Activated CD4-positive, alpha-beta memory T cell treated with anti-CD3 and anti-CD28 coated beads for 36 hours (primary cell): ENCODE measurements at regions of chr1 and their contacts with region 1.

Region 1: GRCh38 chr1:232127190-232127589 is 500.6 kb downstream of the DISC1 start:
- DNase-seq: peak; percentile 13
- H3K4me3 Mint-ChIP-seq: no peak overlapping the region
- H3K27ac Mint-ChIP-seq: no peak overlapping the region
- H3K4me1 Mint-ChIP-seq: peaks cover 21% of the 10 kb centered on the region
- H3K27me3 Mint-ChIP-seq: peaks cover 20% of the 10 kb centered on the region

Region 2: DNA sequence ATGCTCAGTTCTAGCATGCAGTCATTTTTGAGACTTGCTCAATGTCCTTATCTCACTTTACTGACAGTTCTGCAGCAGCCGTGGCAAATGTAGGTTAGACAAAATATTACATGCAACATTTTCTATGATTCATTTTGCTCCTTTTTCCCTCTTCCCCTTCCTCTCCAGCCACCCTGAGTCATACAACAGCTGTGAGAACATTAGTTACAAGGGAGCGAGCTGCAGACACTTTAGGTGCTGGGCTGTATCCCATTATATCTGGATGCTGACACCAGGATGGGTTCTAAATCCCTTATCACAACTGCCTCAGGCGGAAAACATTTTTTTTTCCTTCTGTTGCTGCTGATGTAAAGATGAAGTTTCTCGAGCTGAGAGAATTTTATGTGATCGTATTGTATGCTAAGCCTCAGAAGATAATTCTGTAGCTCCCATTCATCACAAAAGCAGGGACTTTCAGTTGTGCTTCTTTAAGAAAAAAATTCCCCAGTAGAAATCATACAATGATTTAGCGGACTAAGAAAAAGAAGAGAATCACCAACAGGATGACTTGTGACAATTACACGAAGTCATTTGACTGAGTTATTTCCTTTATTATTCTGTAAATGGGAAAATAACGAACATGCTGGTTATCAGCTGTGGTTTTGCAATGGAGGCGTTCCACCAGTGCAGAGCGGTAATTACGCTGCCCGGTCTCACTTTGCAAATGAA is 155.6 kb before region 1 on chr1:
- CTCF ChIA-PET with region 1: no interaction called
- POLR2A ChIA-PET with region 1: no interaction called
- intact Hi-C with region 1: loop called (anchors 5 kb)
- DNase-seq: no peak
- H3K4me3 Mint-ChIP-seq: no peak overlapping the region
- H3K27ac Mint-ChIP-seq: no peak overlapping the region
- H3K4me1 Mint-ChIP-seq: peaks cover 10% of the 10 kb centered on the region
- H3K27me3 Mint-ChIP-seq: no peaks in the 10 kb centered on the region